ENCODE measurements at regions of chr5 and their contacts with region 1.

Region 1: GRCh38 chr5:143536364-143536763 is 132.9 kb upstream of the NR3C1 start:
- DNase-seq: peak; percentile 84
- H3K4me3 ChIP-seq: no peak overlapping the region
- H3K27ac ChIP-seq: peak overlapping the region; percentile 50
- H3K4me1 ChIP-seq: peaks cover 16% of the 10 kb centered on the region
- H3K27me3 ChIP-seq: no peaks in the 10 kb centered on the region
- CTCF ChIP-seq: no peak

Region 2: GRCh38 chr5:142845954-142846805 is 690.2 kb before region 1 on chr5:
- CTCF ChIA-PET with region 1: no interaction called
- dilution Hi-C with region 1: no loop called
- in situ Hi-C with region 1: no loop called
- intact Hi-C with region 1: no loop called
- DNase-seq: no peak
- H3K4me3 ChIP-seq: no peak overlapping the region
- H3K27ac ChIP-seq: no peak overlapping the region
- H3K4me1 ChIP-seq: no peaks in the 10 kb centered on the region
- H3K27me3 ChIP-seq: no peaks in the 10 kb centered on the region
- CTCF ChIP-seq: no peak

Region 3: DNA sequence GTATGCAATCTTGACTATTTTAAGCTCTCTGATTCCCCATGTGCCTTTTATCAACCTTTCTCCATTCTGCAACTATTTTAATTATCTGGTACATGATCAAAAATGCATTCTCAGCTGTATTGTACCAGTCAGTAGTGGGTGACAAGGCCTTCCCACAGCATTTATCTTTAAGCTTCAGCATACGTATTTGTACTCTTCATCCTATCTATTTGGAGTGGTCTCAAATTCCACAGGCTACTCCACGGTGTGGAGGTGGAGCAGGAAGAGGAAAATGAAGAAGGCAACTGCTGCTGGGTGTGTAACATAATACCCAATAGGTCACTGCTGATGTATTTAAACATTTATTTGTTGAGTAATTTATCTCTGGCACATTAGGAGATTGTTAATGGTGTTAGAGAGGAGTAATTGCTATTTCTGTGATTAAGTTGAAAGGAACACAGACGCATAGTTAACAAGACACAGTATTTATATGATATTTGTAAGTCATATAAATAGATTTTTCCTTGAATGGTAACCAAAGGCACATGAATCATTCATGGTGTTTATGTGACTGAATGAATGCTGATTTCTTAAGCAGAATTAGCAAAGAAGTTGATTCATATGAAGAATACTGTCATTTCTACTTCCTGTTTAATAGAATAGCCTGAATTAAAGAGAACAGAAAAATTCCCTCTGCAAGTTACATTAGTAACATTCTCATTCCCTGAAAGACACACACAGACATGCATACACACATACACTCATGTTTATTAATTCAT is 20.9 kb after region 1 on chr5:
- CTCF ChIA-PET with region 1: interaction called, 4 read pairs
- dilution Hi-C with region 1: no loop called
- in situ Hi-C with region 1: no loop called
- intact Hi-C with region 1: loop called (anchors 1 kb)
- DNase-seq: peak; percentile 29
- H3K4me3 ChIP-seq: no peak overlapping the region
- H3K27ac ChIP-seq: no peak overlapping the region
- H3K4me1 ChIP-seq: peaks cover 17% of the 10 kb centered on the region
- H3K27me3 ChIP-seq: no peaks in the 10 kb centered on the region
- CTCF ChIP-seq: no peak

Region 4: GRCh38 chr5:143594913-143595841 is 58.8 kb after region 1 on chr5:
- CTCF ChIA-PET with region 1: no interaction called
- dilution Hi-C with region 1: no loop called
- in situ Hi-C with region 1: no loop called
- intact Hi-C with region 1: loop called (anchors 5 kb)
- DNase-seq: peak; percentile 56
- H3K4me3 ChIP-seq: no peak overlapping the region
- H3K27ac ChIP-seq: peak overlapping the region; percentile 69
- H3K4me1 ChIP-seq: peaks cover 24% of the 10 kb centered on the region
- H3K27me3 ChIP-seq: no peaks in the 10 kb centered on the region
- CTCF ChIP-seq: no peak